AG04449 (cell line): ENCODE measurements at regions of chr12 and their contacts with region 1.

Region 1: DNA sequence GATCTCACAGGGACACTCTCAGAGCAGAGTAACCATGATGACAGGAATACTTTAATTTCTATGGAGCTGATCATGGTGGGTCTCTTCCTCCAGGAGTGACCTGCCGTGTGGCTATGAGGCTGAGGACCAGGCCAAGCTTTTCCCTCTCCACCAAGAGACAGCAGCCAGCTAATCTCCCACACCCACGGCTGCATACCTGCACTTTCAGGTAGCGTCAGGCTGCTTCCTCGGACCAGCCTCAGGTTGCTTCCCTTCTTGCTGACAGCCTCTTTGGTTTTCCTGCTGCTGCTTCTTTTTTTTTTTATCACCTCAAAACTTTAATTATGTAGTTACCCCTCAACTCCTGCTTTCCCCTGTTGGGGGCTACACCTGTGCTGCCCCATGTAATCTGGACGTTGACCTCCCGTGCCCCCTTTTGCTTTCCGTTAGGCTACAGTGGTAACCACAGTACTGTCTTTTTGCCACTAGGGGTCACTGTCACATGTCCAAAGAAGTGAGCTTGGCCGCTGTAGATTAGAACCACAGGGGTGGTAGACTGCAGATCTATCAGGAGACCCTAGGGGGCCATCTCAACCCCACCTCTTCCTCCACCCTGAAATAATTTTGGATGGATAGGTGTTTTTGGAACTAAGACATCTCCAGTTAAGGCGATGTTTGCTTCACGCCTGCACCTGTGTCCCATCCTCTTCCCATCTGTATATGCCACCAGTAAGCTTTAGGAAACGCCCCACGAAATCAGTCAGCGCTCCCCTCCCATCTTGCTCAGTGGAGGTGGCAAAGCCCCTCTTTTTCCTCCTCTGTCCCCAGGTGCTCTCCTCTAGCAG is 7.8 kb upstream of the PIP4K2C start:
- DNase-seq: no peak
- H3K4me3 ChIP-seq: no peak overlapping the region
- CTCF ChIP-seq: peak; percentile 85

Region 2: DNA sequence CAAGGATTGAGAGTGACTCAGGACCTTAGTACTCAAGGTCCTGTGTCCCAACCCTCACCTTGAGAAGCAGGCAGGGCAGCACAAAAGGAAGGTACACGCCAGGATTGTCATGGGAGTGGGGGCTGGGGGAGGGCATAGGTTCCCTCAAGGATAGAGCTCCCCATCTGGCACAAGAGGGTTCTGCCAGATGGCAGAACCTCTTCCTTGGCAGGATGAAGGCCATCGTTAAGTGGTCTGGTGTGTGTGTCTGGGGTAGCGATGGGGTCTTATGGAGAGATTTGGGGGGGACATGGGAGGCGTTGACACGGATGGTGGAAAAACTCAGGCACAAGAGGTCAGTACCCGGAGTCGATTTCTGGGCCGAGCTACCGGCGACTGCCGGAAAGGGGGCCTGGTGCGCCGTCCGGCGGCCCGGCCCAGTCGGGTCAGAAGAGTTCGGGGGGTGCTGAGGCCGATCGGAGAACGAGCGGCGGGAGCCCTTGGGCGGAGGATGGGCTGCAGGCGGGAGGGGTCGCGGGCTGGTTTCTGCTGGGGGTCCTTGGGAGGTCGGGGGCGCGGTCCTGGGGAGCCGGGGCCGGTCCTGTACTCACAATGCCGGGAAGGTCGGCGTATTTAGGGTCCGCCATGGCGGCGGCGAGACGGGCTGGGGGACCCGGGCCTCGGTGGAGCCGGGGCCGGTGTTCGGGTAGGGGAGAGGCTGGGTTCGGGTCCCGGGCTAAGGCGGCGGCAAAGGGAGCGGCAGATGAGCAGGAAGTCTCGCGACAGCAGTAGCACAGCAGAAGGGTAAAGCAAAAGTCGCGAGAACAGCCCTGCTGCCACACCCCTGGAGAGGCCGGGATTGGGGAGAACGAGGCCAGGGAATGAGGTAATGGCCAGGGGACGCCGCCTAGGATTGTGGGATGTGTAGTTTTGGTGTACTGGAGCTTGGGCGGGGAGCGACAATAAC is 36.5 kb before region 1 on chr12 and contains the start of gene DCTN2:
- CTCF ChIA-PET with region 1: interaction called, 11 read pairs
- POLR2A ChIA-PET with region 1: no interaction called
- DNase-seq: peak; percentile 80
- H3K4me3 ChIP-seq: peak within 1 kb of the TSS; percentile 89
- CTCF ChIP-seq: no peak

Region 3: DNA sequence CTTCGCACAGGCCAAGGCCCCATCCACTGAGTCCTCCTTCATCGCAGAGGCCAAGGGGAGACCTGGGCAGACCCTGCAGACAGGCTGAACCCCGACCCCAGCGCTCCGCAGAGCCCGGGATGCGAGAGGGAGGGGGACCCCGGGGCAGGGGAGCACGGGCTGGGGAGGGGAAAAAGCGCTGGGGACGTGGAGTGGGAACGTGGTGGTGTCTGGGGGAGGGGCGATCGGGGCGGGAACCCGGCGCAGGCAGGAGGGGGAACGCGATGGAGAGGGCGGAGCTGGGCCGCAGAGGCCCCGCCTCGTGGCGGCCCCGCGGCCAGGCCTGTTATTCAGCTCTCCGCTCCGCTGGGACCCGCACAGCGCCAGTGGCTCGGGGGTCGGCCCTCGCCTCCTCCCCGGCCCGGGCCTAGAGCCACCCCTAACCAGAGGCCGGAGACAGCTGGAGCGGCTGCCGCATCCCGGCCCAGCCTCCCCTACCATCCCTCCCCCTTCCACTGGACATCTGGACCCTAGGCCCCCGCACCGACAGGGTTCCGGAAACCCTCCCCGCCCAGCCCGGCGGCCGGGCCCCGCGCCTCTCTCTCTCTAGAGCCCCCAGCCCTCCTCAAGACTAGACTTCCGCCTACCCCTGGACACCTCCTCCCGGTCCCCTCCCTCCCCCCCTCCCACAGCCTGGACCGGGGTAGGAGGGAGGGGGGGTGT is 28.0 kb after region 1 on chr12 and contains the start of gene ARHGEF25:
- CTCF ChIA-PET with region 1: interaction called, 113 read pairs
- POLR2A ChIA-PET with region 1: interaction called, 3 read pairs
- DNase-seq: no peak
- H3K4me3 ChIP-seq: peak within 1 kb of the TSS; percentile 70
- CTCF ChIP-seq: no peak

Region 4: GRCh38 chr12:57632694-57633477 is 49.7 kb after region 1 on chr12 and contains the start of gene B4GALNT1:
- CTCF ChIA-PET with region 1: interaction called, 159 read pairs
- POLR2A ChIA-PET with region 1: no interaction called
- DNase-seq: no peak
- H3K4me3 ChIP-seq: peak within 1 kb of the TSS; percentile 67
- CTCF ChIP-seq: peak; percentile 93

Region 5: GRCh38 chr12:57661376-57661775 is 78.2 kb after region 1 on chr12:
- CTCF ChIA-PET with region 1: interaction called, 15 read pairs
- POLR2A ChIA-PET with region 1: no interaction called
- DNase-seq: no peak
- H3K4me3 ChIP-seq: no peak overlapping the region
- CTCF ChIP-seq: no peak

Region 6: GRCh38 chr12:57726151-57726883 is 143.1 kb after region 1 on chr12:
- CTCF ChIA-PET with region 1: interaction called, 17 read pairs
- POLR2A ChIA-PET with region 1: no interaction called
- DNase-seq: peak; percentile 29
- H3K4me3 ChIP-seq: peak overlapping the region; percentile 91
- CTCF ChIP-seq: peak; percentile 94

Region 7: GRCh38 chr12:58584880-58585279 is 1001.7 kb after region 1 on chr12:
- CTCF ChIA-PET with region 1: no interaction called
- POLR2A ChIA-PET with region 1: no interaction called
- DNase-seq: no peak
- H3K4me3 ChIP-seq: no peak overlapping the region
- CTCF ChIP-seq: no peak